Transverse colon (tissue), 4 donors: ENCODE measurements at regions of chr12 and their contacts with region 1.

Region 1: DNA sequence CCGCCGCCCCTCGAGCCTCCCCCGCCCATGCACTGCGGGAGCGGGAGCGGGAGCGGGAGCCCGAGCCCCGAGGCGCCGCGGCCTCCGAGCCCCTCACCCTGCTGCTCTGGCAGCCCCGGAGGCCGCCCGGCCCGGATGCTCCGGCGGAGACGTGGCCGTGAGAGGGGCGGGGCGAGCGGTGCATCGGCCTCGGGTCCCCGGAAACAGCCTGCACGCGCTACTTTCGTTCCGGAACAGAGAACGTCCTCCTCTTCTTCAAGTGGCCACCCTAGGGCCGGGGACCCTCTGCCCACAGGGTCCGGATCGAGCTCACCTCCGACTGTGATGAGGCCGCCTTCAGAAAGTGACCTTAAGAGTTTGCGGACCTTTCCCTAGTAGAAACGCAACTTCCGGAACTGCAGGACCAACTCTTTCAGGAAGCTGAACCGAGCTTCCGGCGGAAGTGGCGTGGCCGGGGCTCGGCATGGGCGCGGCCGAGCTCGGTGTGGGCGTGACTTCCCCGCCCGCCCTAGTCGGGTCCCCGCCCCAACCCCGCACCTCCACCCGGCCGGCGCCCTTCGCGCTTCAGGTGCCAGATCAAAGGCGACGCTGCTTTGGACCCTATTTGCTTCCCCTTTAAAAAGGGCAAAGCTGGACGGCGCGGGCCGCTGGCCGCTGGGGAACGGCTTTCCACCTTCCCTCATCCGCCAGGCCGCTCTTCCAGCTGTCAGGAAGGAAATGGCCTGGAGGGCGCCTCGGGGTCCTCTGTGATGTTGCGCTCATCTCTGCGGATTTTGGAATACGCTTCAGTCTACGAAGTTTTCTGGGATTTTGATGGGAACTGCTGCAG is at the start of gene GOLGA3:
- DNase-seq: peak; percentile 96
- H3K4me3 ChIP-seq: peak within 1 kb of the TSS; percentile 53 to 95 (median 74)
- H3K27ac ChIP-seq: peak within 1 kb of the TSS; percentile 94 to 97 (median 96)
- H3K4me1 ChIP-seq: peaks cover 14 to 34% (median 18%) of the 10 kb centered on the region in 4 donors
- H3K27me3 ChIP-seq: no peaks in the 10 kb centered on the region
- CTCF ChIP-seq: no peak
- EP300 ChIP-seq: peak; percentile 58
- POLR2A ChIP-seq: peak; percentile 78
- total RNA-seq, gene GOLGA3: 90.9 to 113 (median 99.9) TPM

Region 2: DNA sequence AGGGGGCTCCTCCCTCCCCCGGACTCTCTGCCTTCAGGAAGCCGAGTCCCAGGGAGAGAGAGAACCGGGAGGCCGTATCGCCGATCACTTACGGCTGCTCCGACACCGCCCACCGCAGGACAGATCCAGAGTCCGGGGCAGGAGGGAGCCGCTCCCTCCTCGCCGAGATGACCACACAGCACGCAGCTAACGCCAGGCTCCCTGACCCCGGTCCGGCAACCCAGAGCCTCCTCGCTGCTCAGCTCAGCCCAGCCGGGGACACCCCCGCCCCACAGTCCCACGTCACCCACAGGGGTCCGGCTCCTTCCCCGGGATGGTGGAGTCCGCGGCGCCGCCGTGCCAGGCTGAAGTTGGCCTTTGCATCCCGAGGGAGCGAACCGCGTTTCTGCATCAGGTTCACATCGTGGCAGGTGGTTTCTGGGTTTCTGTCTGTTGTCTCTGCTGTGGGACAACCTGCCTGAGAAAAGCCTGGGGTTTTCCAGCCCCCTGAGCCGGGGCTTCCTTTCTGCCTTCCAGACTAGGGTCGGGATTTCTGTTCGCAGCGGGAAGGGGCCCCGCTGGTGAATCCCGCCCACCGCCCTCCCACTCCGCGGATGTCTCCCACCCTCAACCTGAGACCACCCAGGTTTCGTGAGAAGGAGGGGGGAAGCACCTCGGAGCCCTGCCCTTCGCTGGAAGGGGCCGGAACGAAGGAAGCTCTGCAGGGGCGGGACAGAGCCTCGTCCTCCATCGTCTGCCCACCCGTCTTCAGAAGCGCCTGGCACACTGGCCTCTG is 623.5 kb before region 1 on chr12:
- in situ Hi-C with region 1: no loop called
- intact Hi-C with region 1: loop called (anchors 10 kb)
- DNase-seq: no peak
- H3K4me3 ChIP-seq: peak overlapping the region in 2 of 4 donors; percentile 10 to 12
- H3K27ac ChIP-seq: no peak overlapping the region
- H3K4me1 ChIP-seq: peaks cover 0 to 9% (median 4%) of the 10 kb centered on the region in 4 donors
- H3K27me3 ChIP-seq: peaks cover 48% of the 10 kb centered on the region
- CTCF ChIP-seq: no peak
- EP300 ChIP-seq: no peak
- POLR2A ChIP-seq: no peak